Transverse colon (tissue), 4 donors: ENCODE measurements at regions of chrX and their contacts with region 1.

Region 1: GRCh38 chrX:131621650-131622049 is 77.8 kb downstream of the OR13H1 start:
- DNase-seq: no peak
- H3K4me3 ChIP-seq: no peak overlapping the region
- H3K27ac ChIP-seq: no peak overlapping the region
- H3K4me1 ChIP-seq: no peaks in the 10 kb centered on the region
- H3K27me3 ChIP-seq: no peaks in the 10 kb centered on the region
- CTCF ChIP-seq: no peak
- EP300 ChIP-seq: no peak
- POLR2A ChIP-seq: no peak

Region 2: GRCh38 chrX:131589032-131589431 is 32.6 kb before region 1 on chrX:
- in situ Hi-C with region 1: no loop called
- intact Hi-C with region 1: loop called (anchors 2 kb)
- DNase-seq: no peak
- H3K4me3 ChIP-seq: no peak overlapping the region
- H3K27ac ChIP-seq: no peak overlapping the region
- H3K4me1 ChIP-seq: no peaks in the 10 kb centered on the region
- H3K27me3 ChIP-seq: no peaks in the 10 kb centered on the region
- CTCF ChIP-seq: no peak
- EP300 ChIP-seq: no peak
- POLR2A ChIP-seq: no peak